Left cardiac atrium (tissue), 4 donors: ENCODE measurements at regions of chr15 and their contacts with region 1.

Region 1: GRCh38 chr15:65275728-65276126 is 11.0 kb downstream of the PARP16 start:
- DNase-seq: no peak
- ATAC-seq: peak in 1 of 2 donors; percentile 82

Region 2: GRCh38 chr15:65049418-65049840 is 226.3 kb before region 1 on chr15:
- intact Hi-C with region 1: loop called in 1 of 2 experiments (anchors 10 kb)
- DNase-seq: peak; percentile 93
- ATAC-seq: peak; percentile 91 to 97

Region 3: GRCh38 chr15:65184868-65185738 is 90.6 kb before region 1 on chr15 and contains the start of gene CLPX:
- intact Hi-C with region 1: loop called (anchors 1 to 5 kb)
- DNase-seq: peak; percentile 95
- ATAC-seq: peak; percentile 96 to 97
- total RNA-seq, gene CLPX: 40.8 to 52.5 TPM